WTC11 (cell line): ENCODE measurements at regions of chr19 and their contacts with region 1.

Region 1: DNA sequence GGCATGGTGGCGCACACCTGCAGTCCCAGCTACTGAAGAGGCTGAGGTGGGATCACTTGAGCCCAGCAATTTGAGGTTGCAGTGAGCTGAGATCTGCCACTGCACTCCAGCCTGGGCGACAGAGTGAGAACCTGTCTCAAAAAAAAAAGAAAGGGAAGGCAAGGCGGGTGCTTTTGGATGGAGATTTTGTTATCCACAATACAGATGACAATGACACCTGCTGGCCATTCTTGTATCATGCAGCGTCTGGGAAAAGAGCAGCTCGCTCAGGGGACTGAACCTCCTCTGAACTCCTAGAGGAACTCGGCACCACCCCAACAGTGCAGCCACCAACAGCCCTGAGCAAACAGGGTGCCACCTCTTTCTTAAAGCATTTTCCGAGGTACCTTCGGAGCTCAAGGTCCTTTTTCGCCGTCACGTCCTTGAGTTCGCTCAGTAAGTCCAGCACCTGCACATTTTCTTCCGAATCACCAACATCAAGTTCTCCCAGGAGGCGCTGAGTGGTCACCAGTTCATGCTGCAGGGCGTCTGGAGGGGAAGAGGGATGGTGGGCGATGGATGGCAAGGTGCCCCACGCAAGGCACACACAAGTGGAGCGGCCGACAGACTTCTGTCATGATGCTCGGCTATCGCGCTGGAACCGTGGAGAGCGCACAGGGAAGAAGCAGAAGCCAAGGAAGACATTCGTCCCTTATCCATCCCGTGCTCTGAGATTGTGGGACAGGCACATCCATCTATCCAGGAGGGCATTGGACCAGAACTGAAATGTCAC is 22.6 kb downstream of the HAUS8 start:
- DNase-seq: peak; percentile 68
- ATAC-seq: peak; percentile 84
- H3K4me3 Mint-ChIP-seq: no peak overlapping the region
- H3K27ac Mint-ChIP-seq: peak overlapping the region; percentile 88
- H3K4me1 Mint-ChIP-seq: peaks cover 3% of the 10 kb centered on the region
- H3K27me3 Mint-ChIP-seq: no peaks in the 10 kb centered on the region
- CTCF ChIP-seq: peak; percentile 51

Region 2: DNA sequence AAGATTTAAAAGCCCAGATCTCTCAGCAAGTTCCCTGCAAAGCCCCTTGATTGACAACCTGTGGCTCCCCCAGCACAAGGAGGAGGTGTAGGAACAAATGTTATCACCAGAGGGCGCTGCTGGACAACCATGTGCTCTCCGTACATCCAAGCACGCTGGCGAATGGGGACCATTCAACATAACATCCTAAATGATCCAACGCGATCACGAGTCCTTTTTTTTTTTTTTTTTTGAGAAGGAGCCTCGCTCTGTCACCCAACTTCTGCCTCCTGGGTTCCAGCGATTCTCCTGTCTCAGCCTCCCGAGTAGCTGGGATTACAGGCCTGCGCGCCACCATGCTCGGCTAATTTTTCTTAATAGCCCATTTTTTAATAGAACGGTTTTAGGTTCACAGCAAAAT is 281.0 kb before region 1 on chr19:
- CTCF ChIA-PET with region 1: interaction called, 12 read pairs
- POLR2A ChIA-PET with region 1: no interaction called
- DNase-seq: peak; percentile 90
- ATAC-seq: peak; percentile 95
- H3K4me3 Mint-ChIP-seq: no peak overlapping the region
- H3K27ac Mint-ChIP-seq: no peak overlapping the region
- H3K4me1 Mint-ChIP-seq: no peaks in the 10 kb centered on the region
- H3K27me3 Mint-ChIP-seq: peaks cover 23% of the 10 kb centered on the region
- CTCF ChIP-seq: peak; percentile 82

Region 3: DNA sequence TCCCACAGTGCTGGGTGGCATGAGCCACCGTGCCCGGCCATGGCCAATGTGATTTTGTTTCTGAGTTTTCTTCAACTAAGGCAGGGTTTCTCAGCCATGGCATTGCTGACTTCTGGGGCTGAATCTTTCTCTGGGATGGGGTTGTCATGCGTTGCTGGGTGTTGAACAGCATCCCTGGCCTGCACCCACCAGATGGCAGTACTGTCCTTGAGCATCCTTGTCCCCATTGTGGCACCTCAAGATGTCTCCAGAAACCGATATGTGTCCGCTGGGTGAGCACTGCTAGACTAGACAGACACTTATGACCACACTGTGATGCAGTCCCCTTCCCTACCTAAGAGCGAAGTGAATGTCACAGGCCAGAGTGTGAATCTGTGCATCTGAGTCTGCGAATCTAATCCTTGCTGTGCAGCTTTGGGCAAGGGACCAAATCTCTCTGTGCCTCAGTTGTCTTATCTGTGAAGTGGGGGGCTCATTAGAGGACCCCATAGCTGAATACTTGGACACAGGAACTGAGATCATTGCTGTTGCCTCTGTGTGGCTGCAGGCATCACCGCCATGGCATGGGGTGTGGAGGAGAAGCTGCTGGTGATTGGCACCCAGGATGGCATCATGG is 273.7 kb before region 1 on chr19:
- CTCF ChIA-PET with region 1: interaction called, 10 read pairs
- POLR2A ChIA-PET with region 1: no interaction called
- DNase-seq: peak; percentile 82
- ATAC-seq: peak; percentile 85
- H3K4me3 Mint-ChIP-seq: no peak overlapping the region
- H3K27ac Mint-ChIP-seq: no peak overlapping the region
- H3K4me1 Mint-ChIP-seq: no peaks in the 10 kb centered on the region
- H3K27me3 Mint-ChIP-seq: peaks cover 1% of the 10 kb centered on the region
- CTCF ChIP-seq: peak; percentile 57

Region 4: GRCh38 chr19:17041976-17042375 is 10.6 kb before region 1 on chr19:
- CTCF ChIA-PET with region 1: interaction called, 21 read pairs
- POLR2A ChIA-PET with region 1: no interaction called
- DNase-seq: no peak
- ATAC-seq: no peak
- H3K4me3 Mint-ChIP-seq: no peak overlapping the region
- H3K27ac Mint-ChIP-seq: peak overlapping the region; percentile 34; the same call in 1 of the 2 replicates
- H3K4me1 Mint-ChIP-seq: no peaks in the 10 kb centered on the region
- H3K27me3 Mint-ChIP-seq: no peaks in the 10 kb centered on the region; the same call in 1 of the 2 replicates
- CTCF ChIP-seq: no peak

Region 5: GRCh38 chr19:17109962-17110601 is 57.5 kb after region 1 on chr19:
- CTCF ChIA-PET with region 1: no interaction called
- POLR2A ChIA-PET with region 1: no interaction called
- DNase-seq: no peak
- ATAC-seq: no peak
- H3K4me3 Mint-ChIP-seq: no peak overlapping the region
- H3K27ac Mint-ChIP-seq: peak overlapping the region; percentile 63; the same call in 1 of the 2 replicates
- H3K4me1 Mint-ChIP-seq: peaks cover 31% of the 10 kb centered on the region
- H3K27me3 Mint-ChIP-seq: no peaks in the 10 kb centered on the region
- CTCF ChIP-seq: no peak